Naive thymus-derived CD4-positive, alpha-beta T cell (primary cell): ENCODE measurements at regions of chr18 and their contacts with region 1.

Region 1: DNA sequence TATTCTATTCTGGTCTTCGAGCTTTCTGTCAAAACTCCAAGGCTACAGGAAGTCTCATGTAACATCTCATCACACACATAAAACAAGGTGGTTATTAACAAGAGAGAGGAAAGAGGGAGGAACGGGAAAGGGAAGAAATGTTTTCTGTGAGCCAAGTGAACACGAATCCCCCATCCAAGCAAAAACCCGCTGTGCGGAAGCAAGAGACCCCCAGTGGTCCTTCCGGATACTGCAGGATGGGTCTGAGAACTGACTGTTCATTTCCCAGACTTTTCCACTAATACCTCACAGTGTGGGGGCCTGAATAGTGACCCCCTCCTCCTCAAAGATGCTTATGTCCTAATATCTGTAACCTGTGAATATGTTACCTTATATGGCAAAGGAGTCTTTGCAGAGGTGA is 19.0 kb upstream of the DIPK1C start:
- DNase-seq: no peak
- ATAC-seq: no peak
- H3K4me3 ChIP-seq: no peak overlapping the region
- H3K4me3 Mint-ChIP-seq: no peak overlapping the region
- H3K27ac ChIP-seq: no peak overlapping the region
- H3K27ac Mint-ChIP-seq: no peak overlapping the region
- H3K4me1 ChIP-seq: no peaks in the 10 kb centered on the region
- H3K4me1 Mint-ChIP-seq: peaks cover 0 to 4% (median 0%) of the 10 kb centered on the region in 7 donors
- H3K27me3 ChIP-seq: no peaks in the 10 kb centered on the region
- H3K27me3 Mint-ChIP-seq: peaks cover 0 to 5% (median 0%) of the 10 kb centered on the region in 5 donors

Region 2: DNA sequence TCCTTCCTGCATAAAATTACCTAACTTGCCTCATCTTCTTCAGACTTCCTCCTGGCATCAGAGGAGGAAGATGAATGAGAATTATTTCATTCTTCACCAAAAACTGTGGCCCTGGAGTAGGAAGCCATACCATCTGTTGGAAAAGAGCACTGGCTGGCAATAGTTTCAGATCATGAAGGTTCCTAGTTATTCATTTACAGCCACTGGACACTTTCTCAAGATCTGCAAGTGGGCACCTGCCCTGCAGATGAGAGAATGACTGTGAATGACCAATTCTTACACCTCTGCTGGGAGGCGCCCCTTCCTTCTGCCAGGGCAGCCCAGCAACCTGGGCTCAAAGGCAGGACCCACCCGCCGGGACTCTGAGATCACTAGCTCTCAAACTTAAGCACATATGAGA is 32.0 kb before region 1 on chr18:
- CTCF ChIA-PET with region 1: no interaction called
- POLR2A ChIA-PET with region 1: no interaction called
- intact Hi-C with region 1: loop called in 1 of 2 experiments (anchors 5 kb)
- DNase-seq: no peak
- ATAC-seq: no peak
- H3K4me3 ChIP-seq: no peak overlapping the region
- H3K4me3 Mint-ChIP-seq: no peak overlapping the region
- H3K27ac ChIP-seq: no peak overlapping the region
- H3K27ac Mint-ChIP-seq: peak overlapping the region in 1 of 9 donors; percentile 3
- H3K4me1 ChIP-seq: no peaks in the 10 kb centered on the region
- H3K4me1 Mint-ChIP-seq: peaks cover 0 to 2% (median 0%) of the 10 kb centered on the region in 7 donors
- H3K27me3 ChIP-seq: no peaks in the 10 kb centered on the region
- H3K27me3 Mint-ChIP-seq: peaks cover 0 to 6% (median 4%) of the 10 kb centered on the region in 5 donors

Region 3: GRCh38 chr18:74459889-74460288 is 16.3 kb before region 1 on chr18:
- CTCF ChIA-PET with region 1: no interaction called
- POLR2A ChIA-PET with region 1: no interaction called
- intact Hi-C with region 1: no loop called
- DNase-seq: no peak
- ATAC-seq: no peak
- H3K4me3 ChIP-seq: no peak overlapping the region
- H3K4me3 Mint-ChIP-seq: no peak overlapping the region
- H3K27ac ChIP-seq: no peak overlapping the region
- H3K27ac Mint-ChIP-seq: no peak overlapping the region
- H3K4me1 ChIP-seq: peaks cover 0 to 4% of the 10 kb centered on the region in 2 donors
- H3K4me1 Mint-ChIP-seq: peaks cover 0 to 32% (median 28%) of the 10 kb centered on the region in 7 donors
- H3K27me3 ChIP-seq: no peaks in the 10 kb centered on the region
- H3K27me3 Mint-ChIP-seq: peaks cover 14 to 57% (median 24%) of the 10 kb centered on the region in 5 donors

Region 4: DNA sequence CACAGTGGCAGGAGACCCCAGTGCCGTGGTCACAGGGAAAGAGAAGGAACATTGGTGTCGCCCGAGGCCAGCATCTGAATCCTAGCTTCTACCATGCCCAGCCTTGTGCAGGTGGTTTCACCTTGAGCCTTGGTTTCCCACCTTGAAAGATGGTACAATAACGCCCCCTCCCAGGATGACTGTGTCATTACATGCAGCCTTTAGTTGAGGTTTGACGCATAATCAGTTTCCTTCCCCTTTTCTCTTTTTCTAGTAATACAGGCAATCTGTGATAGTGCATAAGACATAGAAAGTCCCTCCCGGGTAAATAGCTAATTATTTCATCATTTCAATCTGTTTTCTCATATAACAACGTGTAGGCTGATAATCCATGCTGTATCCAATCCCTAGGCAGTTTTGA is 91.7 kb after region 1 on chr18:
- CTCF ChIA-PET with region 1: no interaction called
- POLR2A ChIA-PET with region 1: no interaction called
- intact Hi-C with region 1: no loop called
- DNase-seq: no peak
- ATAC-seq: peak; percentile 82
- H3K4me3 ChIP-seq: no peak overlapping the region
- H3K4me3 Mint-ChIP-seq: no peak overlapping the region
- H3K27ac ChIP-seq: no peak overlapping the region
- H3K27ac Mint-ChIP-seq: no peak overlapping the region
- H3K4me1 ChIP-seq: no peaks in the 10 kb centered on the region
- H3K4me1 Mint-ChIP-seq: no peaks in the 10 kb centered on the region
- H3K27me3 ChIP-seq: no peaks in the 10 kb centered on the region
- H3K27me3 Mint-ChIP-seq: peaks cover 16 to 33% (median 18%) of the 10 kb centered on the region in 5 donors